Natural killer cell (primary cell): ENCODE measurements at regions of chr10 and their contacts with region 1.

Region 1: GRCh38 chr10:91251430-91252056 is 31.1 kb downstream of the PCGF5 start:
- DNase-seq: peak; percentile 22 to 84
- ATAC-seq: peak; percentile 84 to 91 (median 86)
- H3K4me3 ChIP-seq: no peak overlapping the region
- H3K4me3 Mint-ChIP-seq: no peak overlapping the region
- H3K27ac ChIP-seq: no peak overlapping the region
- H3K27ac Mint-ChIP-seq: no peak overlapping the region
- H3K4me1 ChIP-seq: no peaks in the 10 kb centered on the region
- H3K4me1 Mint-ChIP-seq: peaks cover 0 to 6% of the 10 kb centered on the region in 2 donors
- H3K27me3 ChIP-seq: no peaks in the 10 kb centered on the region
- H3K27me3 Mint-ChIP-seq: no peaks in the 10 kb centered on the region
- CTCF ChIP-seq: peak; percentile 96

Region 2: GRCh38 chr10:89793649-89794254 is 1457.8 kb before region 1 on chr10:
- intact Hi-C with region 1: loop called (anchors 5 kb)
- DNase-seq: peak in 1 of 2 donors; percentile 79
- ATAC-seq: peak; percentile 63 to 80 (median 76)
- H3K4me3 ChIP-seq: no peak overlapping the region
- H3K4me3 Mint-ChIP-seq: no peak overlapping the region
- H3K27ac ChIP-seq: no peak overlapping the region
- H3K27ac Mint-ChIP-seq: no peak overlapping the region
- H3K4me1 ChIP-seq: no peaks in the 10 kb centered on the region
- H3K4me1 Mint-ChIP-seq: no peaks in the 10 kb centered on the region
- H3K27me3 ChIP-seq: no peaks in the 10 kb centered on the region
- H3K27me3 Mint-ChIP-seq: peaks cover 14 to 22% of the 10 kb centered on the region in 2 donors
- CTCF ChIP-seq: peak; percentile 70

Region 3: DNA sequence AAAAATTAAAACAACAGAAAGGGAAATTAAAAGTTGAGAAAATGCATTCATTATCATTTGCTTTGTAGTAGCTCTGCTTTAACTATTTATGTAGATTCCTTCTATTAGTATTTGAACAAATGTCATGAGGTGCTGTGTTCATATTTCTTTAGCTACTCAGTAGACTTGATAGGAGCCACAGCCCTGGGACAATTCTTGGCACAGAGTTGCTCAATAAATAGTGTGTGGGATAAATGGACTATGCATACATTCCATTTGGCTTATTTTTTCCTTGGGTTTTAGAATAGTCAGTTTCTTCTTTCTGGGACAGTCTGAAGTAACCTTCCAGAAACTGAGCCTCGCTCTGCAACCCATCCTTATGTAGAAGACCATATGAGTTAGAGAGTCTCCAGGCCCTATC is 366.4 kb before region 1 on chr10:
- intact Hi-C with region 1: loop called (anchors 1 kb)
- DNase-seq: no peak
- ATAC-seq: no peak
- H3K4me3 ChIP-seq: no peak overlapping the region
- H3K4me3 Mint-ChIP-seq: no peak overlapping the region
- H3K27ac ChIP-seq: no peak overlapping the region
- H3K27ac Mint-ChIP-seq: no peak overlapping the region
- H3K4me1 ChIP-seq: no peaks in the 10 kb centered on the region
- H3K4me1 Mint-ChIP-seq: no peaks in the 10 kb centered on the region
- H3K27me3 ChIP-seq: no peaks in the 10 kb centered on the region
- H3K27me3 Mint-ChIP-seq: no peaks in the 10 kb centered on the region
- CTCF ChIP-seq: no peak

Region 4: DNA sequence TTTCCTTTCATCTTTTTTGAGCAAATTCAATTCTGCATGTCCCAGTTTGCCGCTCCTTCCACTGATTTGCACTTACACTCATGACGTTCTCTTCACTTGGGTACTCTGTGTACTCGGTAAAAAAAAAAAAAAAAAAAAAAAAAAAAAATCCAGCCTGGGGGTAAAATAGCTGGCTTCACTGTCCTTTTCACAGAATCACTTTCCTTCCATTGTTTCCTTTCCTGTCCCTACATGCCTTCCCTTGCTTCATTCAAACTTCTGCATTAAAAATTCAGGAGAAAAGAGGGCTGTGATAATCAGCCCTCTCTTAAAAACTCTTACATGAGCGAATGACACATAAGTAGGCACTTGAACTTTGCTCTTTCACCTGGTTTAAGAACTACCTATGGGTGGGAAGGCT is 339.4 kb before region 1 on chr10:
- intact Hi-C with region 1: loop called (anchors 1 kb)
- DNase-seq: no peak
- ATAC-seq: no peak
- H3K4me3 ChIP-seq: no peak overlapping the region
- H3K4me3 Mint-ChIP-seq: no peak overlapping the region
- H3K27ac ChIP-seq: no peak overlapping the region
- H3K27ac Mint-ChIP-seq: no peak overlapping the region
- H3K4me1 ChIP-seq: peaks cover 3% of the 10 kb centered on the region
- H3K4me1 Mint-ChIP-seq: no peaks in the 10 kb centered on the region
- H3K27me3 ChIP-seq: no peaks in the 10 kb centered on the region
- H3K27me3 Mint-ChIP-seq: peaks cover 6 to 19% of the 10 kb centered on the region in 2 donors
- CTCF ChIP-seq: no peak

Region 5: GRCh38 chr10:91006001-91006751 is 245.4 kb before region 1 on chr10:
- intact Hi-C with region 1: loop called (anchors 1 kb)
- DNase-seq: peak; percentile 33 to 85
- ATAC-seq: peak; percentile 85 to 96 (median 86)
- H3K4me3 ChIP-seq: no peak overlapping the region
- H3K4me3 Mint-ChIP-seq: no peak overlapping the region
- H3K27ac ChIP-seq: peak overlapping the region; percentile 34
- H3K27ac Mint-ChIP-seq: no peak overlapping the region
- H3K4me1 ChIP-seq: peaks cover 7% of the 10 kb centered on the region
- H3K4me1 Mint-ChIP-seq: no peaks in the 10 kb centered on the region
- H3K27me3 ChIP-seq: no peaks in the 10 kb centered on the region
- H3K27me3 Mint-ChIP-seq: peaks cover 0 to 2% of the 10 kb centered on the region in 2 donors
- CTCF ChIP-seq: peak; percentile 96

Region 6: DNA sequence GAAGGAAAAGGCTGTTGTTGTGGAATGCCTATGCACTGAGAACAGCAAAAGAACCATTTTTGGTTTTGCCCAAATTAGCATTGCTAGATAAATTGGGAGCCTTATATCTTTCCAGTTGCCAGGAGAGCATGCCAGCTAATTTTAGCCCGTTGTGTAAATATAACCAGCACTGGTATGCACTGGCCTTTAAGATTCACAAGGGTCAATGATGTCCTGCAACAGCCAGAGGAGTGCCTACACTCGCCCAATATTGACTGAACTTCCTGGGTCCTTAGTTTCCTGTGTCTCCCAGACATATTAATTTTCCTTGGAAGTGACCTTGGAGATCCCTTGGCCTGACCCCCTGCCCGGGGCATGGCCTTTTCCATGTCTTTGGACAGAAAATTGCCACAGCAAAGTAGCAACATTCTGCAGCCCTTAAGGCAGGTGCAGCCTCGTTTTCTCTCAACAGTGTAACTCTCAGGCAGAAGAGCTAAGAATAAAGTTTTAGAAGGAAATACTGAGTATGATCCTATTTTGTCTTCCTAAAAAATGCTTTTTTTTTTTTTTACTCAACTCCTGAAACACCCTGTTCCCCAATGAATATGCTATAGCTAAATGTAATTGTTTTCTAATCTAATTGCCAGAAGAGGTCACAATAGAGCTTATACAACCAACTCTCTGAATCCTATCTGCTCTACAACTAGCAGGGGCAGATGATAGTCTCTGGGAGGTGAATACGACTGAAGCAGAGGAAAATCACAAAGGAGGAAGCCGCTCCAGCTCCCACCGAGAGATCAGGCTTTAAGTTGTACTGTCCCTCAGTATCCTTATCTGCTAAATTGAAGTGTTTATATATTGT is 163.0 kb before region 1 on chr10:
- intact Hi-C with region 1: loop called (anchors 1 kb)
- DNase-seq: peak in 1 of 2 donors; percentile 50
- ATAC-seq: peak in 1 of 3 donors; percentile 48
- H3K4me3 ChIP-seq: no peak overlapping the region
- H3K4me3 Mint-ChIP-seq: no peak overlapping the region
- H3K27ac ChIP-seq: no peak overlapping the region
- H3K27ac Mint-ChIP-seq: no peak overlapping the region
- H3K4me1 ChIP-seq: no peaks in the 10 kb centered on the region
- H3K4me1 Mint-ChIP-seq: no peaks in the 10 kb centered on the region
- H3K27me3 ChIP-seq: no peaks in the 10 kb centered on the region
- H3K27me3 Mint-ChIP-seq: peaks cover 9 to 10% of the 10 kb centered on the region in 2 donors
- CTCF ChIP-seq: peak; percentile 14

Region 7: DNA sequence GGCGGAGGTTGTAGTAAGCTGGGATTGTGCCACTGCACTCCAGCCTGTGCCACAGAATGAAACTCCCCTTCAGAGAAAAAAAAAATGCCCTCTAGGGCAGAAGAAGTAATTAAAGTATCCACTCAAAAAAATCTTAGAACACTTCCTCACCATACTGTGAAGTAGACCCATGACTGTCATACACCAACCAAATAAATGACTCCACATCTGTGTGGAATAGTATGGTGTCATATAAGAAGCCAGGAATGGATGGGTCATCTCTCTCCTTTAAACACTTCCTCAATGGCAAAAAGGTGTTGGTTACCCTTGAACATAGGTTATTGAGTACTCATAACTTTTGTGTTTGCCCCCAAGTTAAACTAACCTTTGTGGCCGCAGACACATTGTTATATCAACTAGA is 79.2 kb before region 1 on chr10:
- intact Hi-C with region 1: no loop called
- DNase-seq: no peak
- ATAC-seq: no peak
- H3K4me3 ChIP-seq: no peak overlapping the region
- H3K4me3 Mint-ChIP-seq: no peak overlapping the region
- H3K27ac ChIP-seq: no peak overlapping the region
- H3K27ac Mint-ChIP-seq: no peak overlapping the region
- H3K4me1 ChIP-seq: no peaks in the 10 kb centered on the region
- H3K4me1 Mint-ChIP-seq: peaks cover 20 to 47% of the 10 kb centered on the region in 2 donors
- H3K27me3 ChIP-seq: no peaks in the 10 kb centered on the region
- H3K27me3 Mint-ChIP-seq: no peaks in the 10 kb centered on the region
- CTCF ChIP-seq: no peak

Region 8: DNA sequence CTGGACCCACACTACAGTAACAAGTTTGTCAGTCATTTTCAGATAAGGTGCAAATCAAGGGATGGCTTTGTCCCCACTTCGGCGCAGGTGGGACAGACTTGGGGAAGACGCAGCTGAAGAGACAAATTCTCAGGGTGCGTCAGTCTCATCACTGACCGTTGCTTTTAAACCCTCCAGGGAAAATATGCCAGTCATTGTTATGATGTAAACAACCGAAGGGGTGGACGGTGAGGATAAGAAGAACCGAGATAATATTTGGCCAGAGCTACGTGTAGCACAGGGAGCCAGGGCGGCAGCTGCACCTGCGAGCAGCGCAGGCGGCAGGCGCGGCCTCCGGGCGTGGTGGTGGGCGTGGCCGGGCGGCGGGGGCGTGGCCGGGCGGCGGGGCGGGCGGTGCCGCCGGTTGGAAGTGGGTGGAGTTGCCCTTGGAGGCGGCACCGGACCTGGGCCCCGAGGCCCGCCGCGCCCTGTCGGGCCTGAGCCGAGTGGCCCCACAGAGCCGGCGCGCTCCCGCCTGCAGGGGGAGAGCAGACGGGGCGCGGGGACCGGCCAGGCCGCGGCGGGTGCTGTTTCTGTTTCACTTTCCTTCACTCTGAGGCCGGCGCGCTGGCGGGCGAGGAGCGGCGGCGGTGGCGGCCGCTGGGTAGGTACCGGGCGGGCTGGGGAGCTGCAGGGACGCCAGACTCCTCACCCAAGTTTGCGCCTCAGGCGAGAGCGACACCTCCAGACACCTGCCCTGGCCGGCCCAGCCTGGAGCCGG is 31.2 kb before region 1 on chr10 and contains the start of gene PCGF5:
- intact Hi-C with region 1: loop called (anchors 1 kb)
- DNase-seq: peak; percentile 91 to 95
- ATAC-seq: peak; percentile 97 to 99 (median 97)
- H3K4me3 ChIP-seq: peak within 1 kb of the TSS; percentile 61
- H3K4me3 Mint-ChIP-seq: peak within 1 kb of the TSS; percentile 93
- H3K27ac ChIP-seq: peak within 1 kb of the TSS; percentile 84
- H3K27ac Mint-ChIP-seq: peak within 1 kb of the TSS; percentile 71 to 85
- H3K4me1 ChIP-seq: peaks cover 11% of the 10 kb centered on the region
- H3K4me1 Mint-ChIP-seq: peaks cover 33 to 38% of the 10 kb centered on the region in 2 donors
- H3K27me3 ChIP-seq: no peaks in the 10 kb centered on the region
- H3K27me3 Mint-ChIP-seq: no peaks in the 10 kb centered on the region
- CTCF ChIP-seq: peak; percentile 10
- total RNA-seq, gene PCGF5: 52.5 to 60.2 (median 58.6) TPM

Region 9: DNA sequence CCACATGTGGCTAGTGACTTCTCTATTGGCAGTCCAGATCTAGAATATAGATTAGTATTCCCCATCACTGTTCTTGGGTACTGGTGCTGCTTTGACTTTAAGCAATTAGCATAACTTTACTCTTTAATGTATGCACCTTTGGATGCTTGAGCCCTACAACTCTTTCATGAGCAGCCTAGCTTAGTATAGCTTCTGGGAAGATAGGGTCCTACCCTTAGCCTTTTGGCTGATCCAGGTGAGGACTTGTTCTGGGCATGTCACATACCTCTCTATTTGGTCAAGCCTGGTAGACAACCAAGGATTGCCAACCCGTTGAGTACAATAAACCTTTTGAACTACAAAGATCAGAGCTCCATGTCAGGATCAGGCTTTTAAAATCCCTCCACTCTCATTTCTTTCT is 13.4 kb before region 1 on chr10:
- intact Hi-C with region 1: no loop called
- DNase-seq: no peak
- ATAC-seq: no peak
- H3K4me3 ChIP-seq: no peak overlapping the region
- H3K4me3 Mint-ChIP-seq: no peak overlapping the region
- H3K27ac ChIP-seq: no peak overlapping the region
- H3K27ac Mint-ChIP-seq: peak overlapping the region in 1 of 2 donors; percentile 23
- H3K4me1 ChIP-seq: no peaks in the 10 kb centered on the region
- H3K4me1 Mint-ChIP-seq: peaks cover 18 to 25% of the 10 kb centered on the region in 2 donors
- H3K27me3 ChIP-seq: no peaks in the 10 kb centered on the region
- H3K27me3 Mint-ChIP-seq: no peaks in the 10 kb centered on the region
- CTCF ChIP-seq: no peak

Region 10: GRCh38 chr10:91296471-91296870 is 44.9 kb after region 1 on chr10:
- intact Hi-C with region 1: no loop called
- DNase-seq: no peak
- ATAC-seq: no peak
- H3K4me3 ChIP-seq: no peak overlapping the region
- H3K4me3 Mint-ChIP-seq: no peak overlapping the region
- H3K27ac ChIP-seq: no peak overlapping the region
- H3K27ac Mint-ChIP-seq: no peak overlapping the region
- H3K4me1 ChIP-seq: peaks cover 8% of the 10 kb centered on the region
- H3K4me1 Mint-ChIP-seq: peaks cover 11% of the 10 kb centered on the region in 2 donors
- H3K27me3 ChIP-seq: no peaks in the 10 kb centered on the region
- H3K27me3 Mint-ChIP-seq: peaks cover 10 to 13% of the 10 kb centered on the region in 2 donors
- CTCF ChIP-seq: no peak